ENCODE measurements at regions of chr15 and their contacts with region 1.

Region 1: DNA sequence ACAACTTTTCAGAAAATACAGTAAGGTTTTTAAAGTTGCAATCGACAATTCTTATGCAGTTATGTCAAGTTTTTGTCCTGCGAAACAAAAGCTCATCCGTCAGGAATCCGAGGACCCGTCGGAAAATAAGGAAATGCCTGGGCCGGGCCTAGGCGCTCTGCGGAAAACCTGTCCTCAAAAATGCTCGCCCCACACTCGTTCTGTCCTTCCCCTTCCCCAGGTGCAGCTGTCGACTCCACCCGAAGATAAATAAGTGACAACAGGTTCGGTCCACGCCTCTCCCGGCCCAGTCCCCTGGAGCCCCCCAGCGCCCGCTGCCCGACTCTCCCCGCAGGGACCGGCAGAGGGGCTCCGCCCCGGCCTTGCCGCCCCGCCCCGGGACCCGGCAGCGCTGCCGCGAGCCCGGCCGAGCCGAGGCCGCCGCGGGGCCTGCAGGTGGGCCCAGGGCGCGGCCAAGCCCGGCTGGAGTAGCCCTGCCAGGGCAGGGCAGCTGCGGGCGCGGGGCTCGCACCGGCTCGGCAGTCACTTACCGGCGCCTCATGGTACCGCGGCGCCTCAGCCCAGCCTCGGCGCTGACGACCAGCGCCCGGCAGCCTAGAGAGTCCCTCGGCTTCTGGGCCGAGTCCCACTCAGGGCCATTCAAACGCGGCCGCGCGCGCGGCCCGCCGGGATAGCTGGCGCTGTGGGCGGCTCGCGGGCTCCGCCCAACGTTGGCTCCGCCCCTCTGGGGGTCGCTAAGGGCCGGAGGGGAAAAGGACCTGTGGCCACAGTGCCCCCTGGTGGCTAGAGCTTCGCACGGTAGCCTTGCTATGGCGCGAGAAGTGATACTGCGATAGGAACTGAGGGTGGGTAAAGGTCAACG is at the start of gene KATNBL1:
- DNase-seq: peak; percentile 98
- H3K4me3 Mint-ChIP-seq: peak within 1 kb of the TSS; percentile 92
- H3K27ac Mint-ChIP-seq: peak within 1 kb of the TSS; percentile 92
- H3K4me1 Mint-ChIP-seq: peaks cover 17% of the 10 kb centered on the region
- H3K27me3 Mint-ChIP-seq: peaks cover 8% of the 10 kb centered on the region

Region 2: GRCh38 chr15:34055853-34056595 is 153.6 kb before region 1 on chr15:
- CTCF ChIA-PET with region 1: interaction called, 11 read pairs
- DNase-seq: no peak
- H3K4me3 Mint-ChIP-seq: no peak overlapping the region
- H3K27ac Mint-ChIP-seq: no peak overlapping the region
- H3K4me1 Mint-ChIP-seq: no peaks in the 10 kb centered on the region
- H3K27me3 Mint-ChIP-seq: peaks cover 12% of the 10 kb centered on the region

Region 3: DNA sequence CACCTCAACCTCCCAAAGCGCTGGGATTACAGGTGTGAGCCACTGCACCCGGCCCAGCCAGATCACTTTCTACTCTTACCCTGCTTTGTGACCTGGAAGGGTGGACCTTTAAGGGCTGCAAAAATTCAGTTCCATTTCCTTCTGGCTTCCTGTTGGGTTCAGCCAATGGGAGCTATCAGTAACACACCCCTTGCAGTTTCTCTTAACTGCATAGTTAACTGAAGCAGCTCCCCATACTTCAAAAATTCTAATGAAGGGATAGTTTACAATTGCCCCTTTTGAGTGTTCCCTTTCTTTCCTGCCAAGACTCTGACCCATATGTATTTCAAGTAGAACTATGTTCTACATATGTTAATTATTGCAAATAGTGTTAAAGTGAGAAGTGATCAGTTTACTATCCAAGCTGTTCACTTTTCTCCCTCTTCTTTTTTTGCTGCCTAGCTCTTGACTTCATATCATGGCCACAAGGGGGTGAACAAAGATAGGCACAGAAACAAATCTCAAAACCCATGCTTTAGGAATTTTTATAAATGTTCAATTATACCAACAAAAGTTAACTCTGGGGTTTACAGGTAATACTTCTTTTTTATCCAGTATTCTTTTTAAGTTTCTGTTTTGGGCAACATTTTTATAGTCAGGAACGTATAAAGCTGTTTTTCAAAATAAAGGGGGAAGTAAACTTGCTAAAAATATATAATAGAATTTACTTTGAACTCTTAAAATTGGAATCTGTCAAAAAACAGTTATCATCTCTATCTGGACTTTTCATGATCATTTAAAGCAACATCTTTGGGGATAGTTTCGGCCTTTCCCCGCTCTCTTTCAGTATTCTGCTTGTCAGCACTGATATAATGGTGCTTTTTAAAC is 99.6 kb before region 1 on chr15:
- CTCF ChIA-PET with region 1: interaction called, 24 read pairs
- DNase-seq: no peak
- H3K4me3 Mint-ChIP-seq: no peak overlapping the region
- H3K27ac Mint-ChIP-seq: no peak overlapping the region
- H3K4me1 Mint-ChIP-seq: peaks cover 5% of the 10 kb centered on the region
- H3K27me3 Mint-ChIP-seq: peaks cover 10% of the 10 kb centered on the region

Region 4: DNA sequence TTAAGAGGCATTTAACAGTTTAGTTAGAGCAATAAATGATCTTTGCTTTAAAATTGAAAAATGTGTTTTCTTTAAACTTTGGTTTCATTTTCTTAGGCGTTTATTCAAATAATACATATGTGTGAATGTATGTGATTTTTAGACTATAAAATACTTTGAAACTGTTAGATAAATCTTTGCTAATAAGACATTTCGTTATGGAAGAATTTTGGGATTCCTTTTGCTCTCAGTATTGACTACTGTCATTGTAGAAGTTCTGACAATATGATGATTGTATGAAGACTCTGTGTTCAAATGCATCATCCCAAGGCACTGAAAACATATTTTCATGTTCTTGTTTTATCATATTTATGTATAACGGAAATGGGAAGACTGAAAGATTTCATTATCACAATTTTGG is 271.7 kb after region 1 on chr15:
- CTCF ChIA-PET with region 1: no interaction called
- DNase-seq: no peak
- H3K4me3 Mint-ChIP-seq: no peak overlapping the region
- H3K27ac Mint-ChIP-seq: no peak overlapping the region
- H3K4me1 Mint-ChIP-seq: no peaks in the 10 kb centered on the region
- H3K27me3 Mint-ChIP-seq: peaks cover 19% of the 10 kb centered on the region